CD4-positive, alpha-beta T cell (primary cell): ENCODE measurements at regions of chr9 and their contacts with region 1.

Region 1: GRCh38 chr9:32378993-32379729 is 5.3 kb upstream of the ACO1 start:
- DNase-seq: peak in 12 of 14 experiments; percentile 9 to 86 (median 38)
- ATAC-seq: peak; percentile 88
- H3K4me3 ChIP-seq: no peak overlapping the region
- H3K4me3 Mint-ChIP-seq: peak overlapping the region; percentile 1
- H3K27ac ChIP-seq: no peak overlapping the region
- H3K27ac Mint-ChIP-seq: no peak overlapping the region
- H3K4me1 ChIP-seq: peaks cover 12% of the 10 kb centered on the region
- H3K4me1 Mint-ChIP-seq: peaks cover 17% of the 10 kb centered on the region
- H3K27me3 ChIP-seq: peaks cover 0 to 5% of the 10 kb centered on the region in 2 experiments
- H3K27me3 Mint-ChIP-seq: no peaks in the 10 kb centered on the region
- CTCF ChIP-seq: peak; percentile 62

Region 2: DNA sequence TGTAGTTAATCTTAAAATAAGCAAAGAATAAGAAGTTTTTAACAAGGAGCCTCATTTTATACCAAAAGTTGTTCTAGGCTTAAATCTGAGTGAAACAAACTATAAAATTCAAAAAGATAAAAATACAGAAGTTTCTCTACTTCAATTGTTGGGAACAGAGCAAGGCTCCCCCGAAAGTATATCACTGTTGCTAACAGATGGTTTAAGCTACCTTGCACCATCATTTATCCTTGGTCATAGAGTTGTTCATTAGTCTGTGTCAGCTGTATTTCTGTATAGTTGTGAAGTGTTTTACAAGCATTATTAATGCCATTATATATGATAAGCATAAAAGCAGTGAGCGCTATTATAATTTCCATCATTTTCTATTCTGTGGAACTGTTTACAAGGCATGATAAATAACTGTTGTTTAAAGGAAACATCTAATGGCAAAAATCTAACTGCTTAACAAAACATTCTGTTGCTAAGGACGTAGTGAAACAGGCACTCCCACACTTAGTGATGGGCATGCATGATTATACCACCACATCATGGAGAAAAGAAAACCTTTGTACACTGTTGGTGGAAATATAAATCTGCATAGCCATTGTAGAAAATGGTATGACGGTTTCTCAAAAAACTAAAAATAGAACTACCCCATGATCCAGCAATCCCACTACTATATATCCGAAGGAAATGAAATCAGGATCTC is 18.0 kb before region 1 on chr9:
- CTCF ChIA-PET with region 1: no interaction called
- POLR2A ChIA-PET with region 1: no interaction called
- intact Hi-C with region 1: no loop called
- DNase-seq: no peak
- ATAC-seq: no peak
- H3K4me3 ChIP-seq: no peak overlapping the region
- H3K4me3 Mint-ChIP-seq: no peak overlapping the region
- H3K27ac ChIP-seq: no peak overlapping the region
- H3K27ac Mint-ChIP-seq: no peak overlapping the region
- H3K4me1 ChIP-seq: no peaks in the 10 kb centered on the region
- H3K4me1 Mint-ChIP-seq: no peaks in the 10 kb centered on the region
- H3K27me3 ChIP-seq: no peaks in the 10 kb centered on the region
- H3K27me3 Mint-ChIP-seq: peaks cover 42% of the 10 kb centered on the region
- CTCF ChIP-seq: no peak

Region 3: DNA sequence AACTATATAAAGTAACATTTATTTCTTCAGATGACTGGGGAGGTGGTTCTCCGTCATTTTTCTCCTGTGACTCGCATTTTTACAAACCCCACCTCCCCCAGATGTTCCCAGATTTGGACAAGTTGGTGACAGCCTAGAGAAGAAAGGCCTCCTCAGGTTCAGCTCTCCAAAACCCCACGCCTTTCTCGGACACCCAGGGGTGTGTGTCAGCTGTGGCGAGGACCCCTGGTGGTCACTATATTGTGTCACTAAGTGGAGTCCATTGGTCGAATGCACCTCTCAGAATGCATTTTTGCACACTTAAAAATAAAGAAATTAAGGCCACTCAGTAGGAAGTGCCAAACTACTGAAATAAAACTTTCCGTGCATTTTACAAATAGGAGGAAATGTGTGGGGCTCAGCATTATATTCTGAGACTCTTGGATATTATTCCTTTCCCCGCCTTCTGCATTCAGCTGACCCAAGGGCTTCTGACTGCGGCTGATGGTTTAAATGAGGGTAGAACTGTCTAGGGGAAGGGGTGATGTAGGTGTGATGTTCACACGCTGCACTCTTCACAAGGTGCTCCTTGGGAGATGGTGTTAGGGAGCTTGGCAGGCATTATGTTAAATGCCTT is 52.9 kb after region 1 on chr9:
- CTCF ChIA-PET with region 1: interaction called, 40 read pairs
- POLR2A ChIA-PET with region 1: interaction called, 8 read pairs
- intact Hi-C with region 1: loop called (anchors 1 to 2 kb)
- DNase-seq: peak; percentile 4 to 66 (median 32)
- ATAC-seq: no peak
- H3K4me3 ChIP-seq: no peak overlapping the region
- H3K4me3 Mint-ChIP-seq: no peak overlapping the region
- H3K27ac ChIP-seq: no peak overlapping the region
- H3K27ac Mint-ChIP-seq: no peak overlapping the region
- H3K4me1 ChIP-seq: no peaks in the 10 kb centered on the region
- H3K4me1 Mint-ChIP-seq: no peaks in the 10 kb centered on the region
- H3K27me3 ChIP-seq: no peaks in the 10 kb centered on the region
- H3K27me3 Mint-ChIP-seq: no peaks in the 10 kb centered on the region
- CTCF ChIP-seq: peak; percentile 65

Region 4: GRCh38 chr9:32550562-32551433 is 171.6 kb after region 1 on chr9:
- CTCF ChIA-PET with region 1: interaction called, 23 read pairs
- POLR2A ChIA-PET with region 1: interaction called, 33 read pairs
- intact Hi-C with region 1: loop called in 1 of 2 experiments (anchors 1 kb)
- DNase-seq: peak; percentile 92 to 98 (median 95)
- ATAC-seq: peak; percentile 80
- H3K4me3 ChIP-seq: peak overlapping the region; percentile 86
- H3K4me3 Mint-ChIP-seq: peak overlapping the region; percentile 95
- H3K27ac ChIP-seq: peak overlapping the region; percentile 96 to 97
- H3K27ac Mint-ChIP-seq: peak overlapping the region; percentile 99
- H3K4me1 ChIP-seq: peaks cover 30% of the 10 kb centered on the region
- H3K4me1 Mint-ChIP-seq: peaks cover 60% of the 10 kb centered on the region
- H3K27me3 ChIP-seq: no peaks in the 10 kb centered on the region
- H3K27me3 Mint-ChIP-seq: no peaks in the 10 kb centered on the region
- CTCF ChIP-seq: peak; percentile 50

Region 5: DNA sequence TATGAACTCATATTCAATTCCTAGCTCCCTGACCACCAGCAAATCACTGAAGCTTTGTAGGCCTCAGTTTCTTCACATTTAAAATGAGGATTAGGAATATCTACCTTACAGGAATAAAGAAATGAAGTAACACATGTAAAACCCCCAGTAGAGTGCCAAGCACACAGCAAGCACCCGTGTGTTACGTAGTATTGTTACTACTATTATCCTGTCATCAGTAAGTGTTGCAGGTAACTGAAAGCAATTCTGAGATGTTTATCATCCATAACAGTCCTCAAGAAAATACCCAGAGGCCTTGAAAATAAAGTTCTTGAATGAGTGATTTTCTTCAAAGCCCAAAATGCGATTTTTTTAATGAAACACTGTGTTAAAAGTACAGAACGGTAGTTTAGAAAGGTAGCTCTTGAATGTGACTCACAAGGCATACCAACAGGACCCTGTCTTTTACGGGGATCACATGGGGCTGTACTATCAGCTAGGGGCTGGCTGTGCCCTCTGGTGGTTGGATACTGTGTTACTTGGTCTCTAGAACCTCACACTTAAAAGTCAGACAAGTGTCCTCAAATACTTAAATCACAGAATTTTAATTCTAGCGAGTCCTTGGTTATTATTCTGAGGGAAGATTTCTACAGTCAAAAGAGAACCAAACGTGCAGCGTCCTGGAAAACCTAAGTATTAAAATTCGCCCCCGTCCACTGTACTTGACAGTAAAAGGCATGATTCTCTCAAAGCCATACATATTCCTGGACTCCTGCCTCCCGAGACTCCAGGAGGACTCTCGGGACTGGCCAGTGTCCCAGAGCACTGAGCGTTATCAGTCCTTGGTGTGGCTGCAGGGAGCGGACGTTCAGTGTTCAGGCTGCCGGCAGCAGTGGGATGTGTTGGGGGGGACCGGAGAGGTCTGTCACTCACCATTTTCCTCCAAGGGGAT is 193.1 kb after region 1 on chr9:
- CTCF ChIA-PET with region 1: interaction called, 206 read pairs
- POLR2A ChIA-PET with region 1: interaction called, 40 read pairs
- intact Hi-C with region 1: loop called in 1 of 2 experiments (anchors 1 kb)
- DNase-seq: peak; percentile 44 to 92 (median 68)
- ATAC-seq: peak; percentile 84
- H3K4me3 ChIP-seq: peak overlapping the region; percentile 74
- H3K4me3 Mint-ChIP-seq: peak overlapping the region; percentile 99
- H3K27ac ChIP-seq: peak overlapping the region; percentile 74 to 87
- H3K27ac Mint-ChIP-seq: peak overlapping the region; percentile 97
- H3K4me1 ChIP-seq: peaks cover 5% of the 10 kb centered on the region
- H3K4me1 Mint-ChIP-seq: peaks cover 42% of the 10 kb centered on the region
- H3K27me3 ChIP-seq: no peaks in the 10 kb centered on the region
- H3K27me3 Mint-ChIP-seq: no peaks in the 10 kb centered on the region
- CTCF ChIP-seq: peak; percentile 81

Region 6: DNA sequence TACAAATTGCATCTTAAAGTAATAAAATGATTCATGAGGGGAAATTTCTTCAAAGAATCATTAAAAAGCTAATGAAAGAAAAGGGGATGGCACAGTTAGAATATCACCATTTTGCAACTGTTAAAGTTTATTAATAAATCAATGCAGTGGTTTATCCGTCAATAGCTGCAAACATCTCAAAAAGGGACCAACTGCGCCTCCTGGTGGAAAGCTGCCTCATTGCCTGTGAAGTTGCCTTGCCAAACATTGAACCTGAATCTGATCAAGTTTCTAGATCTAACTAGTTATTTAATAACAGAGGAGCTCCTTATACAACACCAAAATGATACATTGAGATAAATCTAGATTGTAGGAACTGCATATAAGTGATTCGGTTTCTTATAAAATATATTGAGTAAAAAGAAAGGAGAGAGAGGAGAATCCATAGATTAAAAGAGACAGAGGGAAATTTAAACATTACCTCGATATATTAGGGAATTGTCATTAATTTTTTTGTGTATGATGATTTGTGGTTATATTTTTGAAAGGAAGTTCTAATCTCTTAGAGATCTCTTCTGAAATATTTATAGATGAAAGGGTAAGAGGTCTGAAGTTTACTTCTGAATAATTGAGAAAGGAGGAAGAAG is 200.7 kb after region 1 on chr9:
- CTCF ChIA-PET with region 1: interaction called, 206 read pairs
- POLR2A ChIA-PET with region 1: interaction called, 40 read pairs
- intact Hi-C with region 1: loop called (anchors 1 kb)
- DNase-seq: peak; percentile 68 to 88 (median 77)
- ATAC-seq: peak; percentile 69
- H3K4me3 ChIP-seq: no peak overlapping the region
- H3K4me3 Mint-ChIP-seq: no peak overlapping the region
- H3K27ac ChIP-seq: no peak overlapping the region
- H3K27ac Mint-ChIP-seq: no peak overlapping the region
- H3K4me1 ChIP-seq: no peaks in the 10 kb centered on the region
- H3K4me1 Mint-ChIP-seq: no peaks in the 10 kb centered on the region
- H3K27me3 ChIP-seq: no peaks in the 10 kb centered on the region
- H3K27me3 Mint-ChIP-seq: peaks cover 34% of the 10 kb centered on the region
- CTCF ChIP-seq: peak; percentile 98

Region 7: DNA sequence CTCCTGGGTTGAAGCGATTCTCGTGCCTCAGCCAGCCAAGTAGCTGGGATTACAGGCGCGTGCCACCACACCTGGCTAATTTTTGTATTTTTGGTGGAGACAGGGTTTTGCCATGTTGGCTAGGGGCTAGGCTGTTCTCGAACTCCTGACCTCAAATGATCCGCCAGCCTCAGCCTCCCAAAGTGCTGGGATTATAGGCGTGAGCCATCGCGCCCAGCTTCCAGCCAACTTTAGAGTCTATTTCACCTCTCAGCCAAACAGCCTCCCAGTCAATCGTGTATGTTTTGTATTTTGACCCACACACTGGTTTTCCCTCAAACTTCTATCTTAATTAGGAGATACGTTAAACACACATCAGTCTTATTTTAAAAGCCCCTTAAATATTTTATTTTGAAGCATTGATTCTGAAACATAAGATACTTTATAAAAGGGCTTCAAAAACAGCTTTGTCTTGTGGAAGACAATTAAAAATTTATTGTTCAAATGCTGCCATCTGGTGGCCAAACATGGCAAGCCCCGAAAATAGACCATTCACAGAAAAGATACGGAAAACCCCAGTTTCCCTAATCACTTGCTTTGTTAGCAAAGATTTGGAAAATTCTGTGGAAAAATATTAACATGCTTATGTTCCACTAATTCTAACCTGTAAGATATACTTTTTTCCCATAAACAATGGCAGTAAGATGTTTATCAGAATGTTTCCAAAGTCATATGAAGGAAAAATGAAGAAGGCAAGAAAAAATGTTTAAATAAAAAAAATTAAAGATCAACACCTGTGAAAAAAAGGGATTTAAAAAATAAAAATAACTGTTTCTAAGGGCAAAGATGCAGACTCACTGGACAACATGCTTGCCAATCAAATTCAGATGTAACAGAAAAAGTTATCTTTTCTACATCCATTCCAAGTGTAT is 589.2 kb after region 1 on chr9:
- CTCF ChIA-PET with region 1: interaction called, 20 read pairs
- POLR2A ChIA-PET with region 1: interaction called, 3 read pairs
- intact Hi-C with region 1: loop called (anchors 1 to 2 kb)
- DNase-seq: peak; percentile 26 to 71 (median 48)
- ATAC-seq: no peak
- H3K4me3 ChIP-seq: no peak overlapping the region
- H3K4me3 Mint-ChIP-seq: no peak overlapping the region
- H3K27ac ChIP-seq: no peak overlapping the region
- H3K27ac Mint-ChIP-seq: no peak overlapping the region
- H3K4me1 ChIP-seq: no peaks in the 10 kb centered on the region
- H3K4me1 Mint-ChIP-seq: peaks cover 4% of the 10 kb centered on the region
- H3K27me3 ChIP-seq: no peaks in the 10 kb centered on the region
- H3K27me3 Mint-ChIP-seq: no peaks in the 10 kb centered on the region
- CTCF ChIP-seq: peak; percentile 92